Heart left ventricle (tissue), 16 donors: ENCODE measurements at regions of chr20 and their contacts with region 1.

Region 1: GRCh38 chr20:19981031-19981451 is 36.1 kb upstream of the NAA20 start:
- DNase-seq: peak in 1 of 5 donors; percentile 50
- ATAC-seq: peak in 3 of 4 donors; percentile 18 to 48 (median 35)
- H3K4me3 ChIP-seq: no peak overlapping the region
- H3K27ac ChIP-seq: peak overlapping the region in 10 of 12 donors; percentile 22 to 96 (median 58)
- H3K4me1 ChIP-seq: peaks cover 10 to 99% (median 94%) of the 10 kb centered on the region in 12 donors
- H3K27me3 ChIP-seq: no peaks in the 10 kb centered on the region
- CTCF ChIP-seq: no peak
- POLR2A ChIP-seq: no peak

Region 2: DNA sequence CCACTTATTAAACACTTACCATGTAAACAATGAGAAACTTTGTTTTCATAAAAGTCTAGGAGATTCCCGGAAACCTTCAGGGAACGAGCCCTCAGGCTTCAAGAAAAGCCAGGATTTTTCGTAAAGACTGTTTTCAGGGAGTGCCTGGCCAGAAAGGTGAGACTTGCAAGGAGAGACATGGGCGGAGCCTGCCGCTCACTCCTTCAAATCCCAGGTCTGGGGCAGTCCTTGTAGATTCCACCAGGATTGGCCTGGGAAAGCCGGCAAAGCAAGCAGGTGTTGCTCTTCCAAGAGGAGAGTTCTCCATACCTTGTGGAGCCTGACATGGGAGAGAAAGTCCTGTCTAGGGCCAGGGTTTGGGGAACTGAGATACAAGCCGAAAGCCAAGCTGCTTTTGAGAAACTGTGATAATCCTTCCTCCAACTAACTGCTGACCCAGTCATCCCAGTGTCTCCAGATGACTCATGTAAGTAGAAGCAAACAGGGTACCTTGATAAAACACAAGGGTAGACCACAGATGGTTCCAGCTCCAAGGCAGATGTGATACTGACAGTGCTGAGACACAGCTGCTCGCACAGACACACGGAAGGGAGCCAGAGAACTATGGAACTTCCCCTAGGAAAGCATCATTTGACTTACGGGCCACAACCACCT is 33.3 kb before region 1 on chr20:
- intact Hi-C with region 1: loop called in 2 of 10 experiments (anchors 5 kb)
- DNase-seq: no peak
- ATAC-seq: peak in 1 of 4 donors; percentile 40
- H3K4me3 ChIP-seq: no peak overlapping the region
- H3K27ac ChIP-seq: peak overlapping the region in 1 of 12 donors; percentile 9
- H3K4me1 ChIP-seq: peaks cover 11 to 68% (median 42%) of the 10 kb centered on the region in 12 donors
- H3K27me3 ChIP-seq: no peaks in the 10 kb centered on the region
- CTCF ChIP-seq: no peak
- POLR2A ChIP-seq: no peak

Region 3: DNA sequence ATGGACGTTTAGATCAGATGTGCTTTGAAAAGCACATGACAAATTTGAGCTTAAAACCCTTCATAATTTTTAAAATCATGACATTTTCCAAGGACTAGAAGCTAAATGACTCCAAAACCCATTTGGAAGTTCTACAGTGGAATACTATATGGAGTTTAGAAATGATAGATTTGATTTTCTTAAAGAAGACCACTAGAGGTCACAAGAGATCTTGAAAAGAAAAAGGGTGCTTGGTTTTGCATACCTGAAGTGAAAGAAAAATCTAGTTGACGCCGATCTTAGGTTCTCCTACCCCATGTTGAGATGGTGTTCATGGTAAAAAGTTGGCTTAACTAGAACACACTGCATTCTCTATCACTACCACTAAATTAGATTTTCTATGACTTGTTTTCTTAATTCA is 102.8 kb after region 1 on chr20:
- intact Hi-C with region 1: no loop called
- DNase-seq: no peak
- ATAC-seq: peak in 3 of 4 donors; percentile 7 to 31 (median 29)
- H3K4me3 ChIP-seq: peak overlapping the region in 1 of 12 donors; percentile 11
- H3K27ac ChIP-seq: peak overlapping the region in 11 of 12 donors; percentile 70 to 98 (median 86)
- H3K4me1 ChIP-seq: peaks cover 0 to 12% (median 5%) of the 10 kb centered on the region in 12 donors
- H3K27me3 ChIP-seq: peaks cover 0 to 4% (median 0%) of the 10 kb centered on the region in 9 donors
- CTCF ChIP-seq: peak; percentile 26 to 67 (median 52)
- POLR2A ChIP-seq: no peak